Heart right ventricle (tissue), 16 donors: ENCODE measurements at regions of chr2 and their contacts with region 1.

Region 1: GRCh38 chr2:165287094-165287778 is 48.0 kb downstream of the SCN2A start:
- DNase-seq: no peak
- ATAC-seq: no peak
- H3K4me3 ChIP-seq: no peak overlapping the region
- H3K27ac ChIP-seq: no peak overlapping the region
- H3K4me1 ChIP-seq: no peaks in the 10 kb centered on the region
- H3K27me3 ChIP-seq: no peaks in the 10 kb centered on the region
- CTCF ChIP-seq: no peak

Region 2: DNA sequence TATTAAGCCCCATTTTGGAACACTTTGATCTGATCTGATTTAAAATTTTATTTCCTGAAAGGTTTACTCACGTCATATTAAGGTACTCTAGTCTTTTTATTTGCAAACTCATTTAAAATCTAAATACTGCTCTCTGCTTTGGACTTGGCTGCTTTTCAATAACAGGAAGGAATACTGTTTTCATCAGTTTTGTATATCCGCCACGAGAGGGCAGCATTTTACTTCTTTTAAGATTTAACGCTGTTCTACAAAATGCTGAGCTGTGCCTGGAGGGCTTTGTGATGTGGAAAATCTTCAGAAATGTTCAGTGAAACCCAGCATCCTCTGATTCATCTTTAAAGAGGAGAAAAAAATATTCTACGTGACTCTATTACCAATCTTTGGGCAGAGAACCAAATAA is 294.4 kb before region 1 on chr2:
- intact Hi-C with region 1: loop called in 4 of 10 experiments (anchors 5 to 10 kb)
- DNase-seq: peak in 1 of 2 donors; percentile 73
- ATAC-seq: peak in 7 of 8 donors; percentile 55 to 80 (median 65)
- H3K4me3 ChIP-seq: no peak overlapping the region
- H3K27ac ChIP-seq: no peak overlapping the region
- H3K4me1 ChIP-seq: peaks cover 0 to 18% (median 9%) of the 10 kb centered on the region in 9 donors
- H3K27me3 ChIP-seq: no peaks in the 10 kb centered on the region
- CTCF ChIP-seq: peak; percentile 26 to 70 (median 58)